Dorsolateral prefrontal cortex (tissue), 120 donors: ENCODE measurements at regions of chr13 and their contacts with region 1.

Region 1: GRCh38 chr13:67155898-67156722 is 74.0 kb downstream of the PCDH9 start:
- DNase-seq: peak in 2 of 10 donors; percentile 32 to 37
- H3K4me3 ChIP-seq: peak overlapping the region in 55 of 59 donors; percentile 3 to 64 (median 40)
- H3K27ac ChIP-seq: peak overlapping the region in 57 of 59 donors; percentile 9 to 93 (median 82)
- H3K27me3 ChIP-seq: no peaks in the 10 kb centered on the region
- CTCF ChIP-seq: peak in 1 of 56 donors; percentile 11

Region 2: DNA sequence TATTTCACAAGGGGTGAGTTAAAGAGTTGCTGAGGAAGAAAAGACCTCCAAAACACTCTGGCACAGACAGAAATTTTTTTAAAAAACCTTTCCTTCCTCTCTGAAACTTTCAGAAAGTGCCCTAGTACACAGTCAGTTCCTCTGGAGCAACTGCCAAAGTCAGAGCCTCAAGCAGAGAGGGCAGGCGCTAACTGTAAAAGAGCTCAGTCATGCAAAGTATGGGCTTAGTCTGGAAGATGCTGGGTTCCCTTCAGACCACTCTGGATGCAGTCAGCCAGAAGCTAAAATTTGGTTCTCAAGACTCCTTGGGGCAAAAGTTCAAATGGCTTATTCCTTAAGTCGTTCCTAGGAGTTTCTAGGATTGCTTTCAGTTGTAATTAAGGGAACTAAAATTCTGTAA is 597.6 kb before region 1 on chr13:
- intact Hi-C with region 1: no loop called
- DNase-seq: no peak
- H3K4me3 ChIP-seq: no peak overlapping the region
- H3K27ac ChIP-seq: peak overlapping the region in 4 of 59 donors; percentile 6 to 47 (median 22)
- H3K27me3 ChIP-seq: no peaks in the 10 kb centered on the region
- CTCF ChIP-seq: no peak

Region 3: DNA sequence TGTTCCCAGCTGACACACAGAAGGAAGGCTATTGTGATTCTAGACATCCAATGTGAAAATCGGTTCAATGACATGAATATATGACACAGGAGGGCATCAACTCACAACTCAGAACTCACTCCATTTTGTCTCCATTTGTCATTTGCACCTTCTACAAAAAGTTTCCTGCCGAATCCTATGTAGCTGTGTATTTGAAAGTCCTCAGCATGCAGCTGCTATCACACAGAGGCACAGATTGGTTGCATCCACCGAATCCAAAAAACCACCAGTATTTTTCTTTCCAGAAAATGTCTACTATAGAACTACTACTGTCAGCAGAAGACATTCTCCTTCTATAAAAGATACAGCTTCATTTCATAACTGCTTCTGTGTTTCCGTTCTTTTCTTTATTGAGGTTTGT is 60.8 kb after region 1 on chr13:
- intact Hi-C with region 1: loop called in 1 of 2 experiments (anchors 10 kb)
- DNase-seq: no peak
- H3K4me3 ChIP-seq: peak overlapping the region in 48 of 59 donors; percentile 3 to 97 (median 37)
- H3K27ac ChIP-seq: peak overlapping the region; percentile 18 to 99 (median 80)
- H3K27me3 ChIP-seq: no peaks in the 10 kb centered on the region
- CTCF ChIP-seq: no peak